Panc1 (cell line): ENCODE measurements at regions of chr17 and their contacts with region 1.

Region 1: GRCh38 chr17:80147035-80147836 is at the start of gene EIF4A3:
- DNase-seq: peak; percentile 93
- ATAC-seq: peak; percentile 95
- H3K4me3 ChIP-seq: peak within 1 kb of the TSS; percentile 58 to 98
- H3K27ac ChIP-seq: peak within 1 kb of the TSS; percentile 86
- H3K4me1 ChIP-seq: peaks cover 12% of the 10 kb centered on the region
- H3K27me3 ChIP-seq: no peaks in the 10 kb centered on the region
- CTCF ChIP-seq: no peak
- total RNA-seq, gene EIF4A3: 169 TPM

Region 2: DNA sequence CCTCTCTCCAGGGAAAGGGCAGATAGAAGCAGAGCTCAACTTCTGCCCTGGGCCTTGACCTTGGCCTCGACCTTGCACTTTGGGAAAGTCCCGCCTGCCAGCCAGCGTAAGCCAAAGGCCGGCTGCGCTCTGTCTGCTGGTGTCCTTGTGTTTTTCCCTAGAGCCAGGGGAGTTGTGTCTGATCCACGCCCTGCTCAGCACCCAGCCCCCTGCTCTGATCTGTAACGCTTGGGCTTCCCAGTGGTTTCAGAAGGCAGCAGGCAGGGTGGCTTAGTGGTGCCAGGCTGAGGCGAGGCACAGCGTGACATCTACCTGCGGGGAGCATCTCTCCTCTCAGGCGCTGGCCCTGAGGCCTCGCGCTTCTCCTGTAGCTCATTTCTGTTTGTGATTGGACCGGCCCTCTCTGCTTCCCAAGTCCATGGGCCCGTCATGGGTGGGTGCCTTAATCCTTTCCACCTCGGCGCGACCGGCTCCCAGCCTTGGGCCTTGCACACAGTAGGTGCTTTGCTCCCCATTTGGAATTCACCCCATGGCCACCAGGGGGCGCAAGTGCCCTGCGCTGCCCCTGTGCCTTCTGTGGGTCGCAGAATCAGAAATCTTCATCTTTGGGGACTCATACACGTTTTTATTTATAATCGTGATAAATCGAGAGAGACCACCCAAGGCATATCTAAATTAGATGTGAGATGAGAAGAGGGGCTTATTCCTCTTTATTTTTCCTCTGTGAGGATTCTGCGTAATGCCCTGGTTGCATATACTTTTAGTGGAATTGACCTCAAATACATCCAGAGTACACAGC is 48.7 kb after region 1 on chr17:
- CTCF ChIA-PET with region 1: interaction called, 3 read pairs
- POLR2A ChIA-PET with region 1: interaction called, 11 read pairs
- in situ Hi-C with region 1: no loop called
- intact Hi-C with region 1: no loop called
- DNase-seq: peak; percentile 30
- ATAC-seq: 0 out of 2 replicates have a peak, but pooled peaks have one; percentile 40
- H3K4me3 ChIP-seq: no peak overlapping the region
- H3K27ac ChIP-seq: no peak overlapping the region
- H3K4me1 ChIP-seq: 0 out of 2 replicates have a peak, but pooled peaks cover 6% of the 10 kb centered on the region
- H3K27me3 ChIP-seq: no peaks in the 10 kb centered on the region
- CTCF ChIP-seq: peak; percentile 98

Region 3: GRCh38 chr17:80243526-80244433 is 96.5 kb after region 1 on chr17:
- CTCF ChIA-PET with region 1: no interaction called
- POLR2A ChIA-PET with region 1: interaction called, 14 read pairs
- in situ Hi-C with region 1: no loop called
- intact Hi-C with region 1: no loop called
- DNase-seq: no peak
- ATAC-seq: no peak
- H3K4me3 ChIP-seq: no peak overlapping the region
- H3K27ac ChIP-seq: no peak overlapping the region
- H3K4me1 ChIP-seq: no peaks in the 10 kb centered on the region
- H3K27me3 ChIP-seq: no peaks in the 10 kb centered on the region
- CTCF ChIP-seq: no peak